Ovary (tissue), 10 donors: ENCODE measurements at regions of chr7 and their contacts with region 1.

Region 1: GRCh38 chr7:134690016-134690415 is 43.4 kb downstream of the BPGM start:
- DNase-seq: peak in 2 of 5 donors; percentile 37 to 56
- H3K4me3 ChIP-seq: peak overlapping the region; percentile 22
- H3K27ac ChIP-seq: peak overlapping the region; percentile 43 to 72
- H3K4me1 ChIP-seq: peaks cover 26% of the 10 kb centered on the region
- H3K27me3 ChIP-seq: no peaks in the 10 kb centered on the region
- CTCF ChIP-seq: peak; percentile 31 to 86 (median 82)
- EP300 ChIP-seq: no peak
- POLR2A ChIP-seq: no peak

Region 2: DNA sequence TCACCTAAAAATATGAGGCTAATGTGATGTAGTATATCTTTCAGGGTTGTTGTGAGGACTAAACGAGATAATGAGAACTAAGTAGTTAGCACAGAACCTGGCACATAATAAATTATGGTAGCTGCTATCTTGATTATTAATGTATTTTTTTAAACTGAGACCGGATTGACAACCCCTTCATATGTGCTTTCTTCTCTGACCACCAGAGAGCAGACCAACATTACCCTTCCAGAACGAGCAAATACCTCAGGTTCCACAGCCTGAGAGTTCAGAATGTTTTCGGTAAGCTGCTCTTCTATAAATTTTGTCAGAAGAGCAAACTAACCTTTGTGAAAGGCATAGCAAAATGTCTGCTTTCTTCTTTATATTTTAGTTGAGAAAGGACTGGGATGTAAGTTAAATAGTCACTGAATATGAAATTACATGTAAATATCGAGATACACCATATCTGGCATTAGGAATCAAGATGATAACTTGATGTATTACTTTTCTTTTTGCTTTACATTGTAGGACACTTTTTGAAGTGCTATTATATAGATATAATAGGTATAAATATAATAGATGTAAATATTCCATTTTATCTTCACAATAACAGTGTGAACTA is 57.0 kb before region 1 on chr7:
- intact Hi-C with region 1: no loop called
- DNase-seq: no peak
- H3K4me3 ChIP-seq: no peak overlapping the region
- H3K27ac ChIP-seq: no peak overlapping the region
- H3K4me1 ChIP-seq: no peaks in the 10 kb centered on the region
- H3K27me3 ChIP-seq: no peaks in the 10 kb centered on the region
- CTCF ChIP-seq: no peak
- EP300 ChIP-seq: no peak
- POLR2A ChIP-seq: no peak

Region 3: GRCh38 chr7:134724606-134725005 is 34.6 kb after region 1 on chr7:
- intact Hi-C with region 1: no loop called
- DNase-seq: no peak
- H3K4me3 ChIP-seq: no peak overlapping the region
- H3K27ac ChIP-seq: peak overlapping the region in 1 of 2 donors; percentile 4
- H3K4me1 ChIP-seq: peaks cover 22% of the 10 kb centered on the region
- H3K27me3 ChIP-seq: no peaks in the 10 kb centered on the region
- CTCF ChIP-seq: no peak
- EP300 ChIP-seq: no peak
- POLR2A ChIP-seq: no peak

Region 4: DNA sequence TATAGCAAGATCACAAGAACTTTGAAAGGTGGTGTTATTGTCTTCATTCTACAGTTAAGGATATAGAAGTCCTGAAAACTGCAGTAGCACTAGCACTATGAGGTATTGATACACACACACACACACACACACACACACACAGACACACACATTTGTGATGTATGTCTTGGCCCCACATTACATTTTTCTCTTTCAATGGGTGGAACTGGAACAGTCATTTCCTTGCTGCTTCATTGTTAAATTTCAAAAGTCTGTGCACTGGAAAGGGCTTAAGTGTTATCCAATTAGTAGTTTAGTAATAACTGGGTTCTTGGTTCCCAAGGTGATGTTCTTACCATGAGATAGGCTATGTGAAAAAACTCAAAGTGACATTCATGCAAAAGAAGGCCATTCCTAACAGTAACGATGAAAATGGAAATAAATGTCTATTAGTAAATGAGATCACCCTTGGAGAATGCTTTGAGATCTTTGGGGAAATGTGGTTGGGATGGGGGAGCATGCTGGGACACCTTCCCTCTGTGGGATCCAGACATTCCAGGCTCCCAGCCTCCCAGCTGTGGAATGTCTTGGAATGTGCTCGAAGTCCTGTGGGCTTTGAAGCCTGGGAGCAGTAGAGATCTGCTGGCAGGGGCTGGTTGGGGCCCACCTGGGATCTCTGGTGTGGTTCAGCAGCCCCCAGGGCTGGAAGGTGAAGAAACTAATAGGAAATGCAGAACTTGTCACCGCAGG is 52.1 kb after region 1 on chr7:
- intact Hi-C with region 1: loop called in 3 of 4 experiments (anchors 1 to 5 kb)
- DNase-seq: peak in 3 of 5 donors; percentile 23 to 56 (median 35)
- H3K4me3 ChIP-seq: no peak overlapping the region
- H3K27ac ChIP-seq: peak overlapping the region; percentile 16 to 85
- H3K4me1 ChIP-seq: peaks cover 16% of the 10 kb centered on the region
- H3K27me3 ChIP-seq: no peaks in the 10 kb centered on the region
- CTCF ChIP-seq: no peak
- EP300 ChIP-seq: no peak
- POLR2A ChIP-seq: no peak

Region 5: DNA sequence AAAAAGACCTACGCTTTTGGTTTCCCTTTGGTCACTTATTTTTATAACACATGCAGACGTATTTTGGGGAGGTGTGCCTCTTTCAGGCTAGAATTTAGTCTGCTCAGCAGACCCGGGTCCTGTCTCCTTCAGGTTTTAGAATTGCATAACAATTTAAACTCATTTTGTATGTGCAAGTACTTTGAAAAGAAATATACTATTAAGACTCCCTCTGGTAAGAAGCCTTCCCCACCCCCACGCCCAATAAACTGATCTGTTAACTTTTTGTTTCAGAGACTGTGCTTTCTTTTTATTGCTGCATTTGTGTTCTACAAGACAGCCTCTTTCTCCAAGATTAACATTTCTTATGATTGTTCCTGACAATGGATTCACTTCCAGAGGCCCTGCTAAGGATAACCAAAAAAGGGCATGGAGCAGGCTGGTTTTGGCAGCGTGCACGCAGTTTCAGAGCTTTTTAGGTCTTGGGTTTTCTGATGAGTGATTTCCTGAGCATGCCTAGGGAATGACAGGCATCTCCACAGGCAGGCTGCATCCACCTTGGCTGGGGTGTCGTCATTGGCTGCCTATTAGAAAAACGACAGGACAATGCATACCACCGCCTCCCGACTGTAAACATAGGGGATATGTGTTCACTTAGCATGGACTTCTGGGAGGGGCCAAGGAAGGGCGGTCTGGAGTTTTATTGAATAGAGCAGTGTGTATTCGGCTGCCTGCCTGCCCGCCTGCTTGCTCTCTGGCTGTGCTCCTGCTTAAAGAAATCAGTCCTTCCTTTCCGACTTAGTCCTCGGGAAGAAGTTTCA is 89.1 kb after region 1 on chr7 and contains the start of gene CALD1:
- intact Hi-C with region 1: loop called in 1 of 4 experiments (anchors 10 kb)
- DNase-seq: peak; percentile 69 to 76 (median 75)
- H3K4me3 ChIP-seq: peak within 1 kb of the TSS; percentile 71
- H3K27ac ChIP-seq: peak within 1 kb of the TSS; percentile 51 to 82
- H3K4me1 ChIP-seq: peaks cover 13% of the 10 kb centered on the region
- H3K27me3 ChIP-seq: no peaks in the 10 kb centered on the region
- CTCF ChIP-seq: no peak
- EP300 ChIP-seq: no peak
- POLR2A ChIP-seq: peak; percentile 36
- total RNA-seq, gene CALD1: 306 to 697 (median 463) TPM

Region 6: GRCh38 chr7:134954197-134955082 is 264.4 kb after region 1 on chr7:
- intact Hi-C with region 1: loop called in 2 of 4 experiments (anchors 2 to 5 kb)
- DNase-seq: no peak
- H3K4me3 ChIP-seq: no peak overlapping the region
- H3K27ac ChIP-seq: no peak overlapping the region
- H3K4me1 ChIP-seq: no peaks in the 10 kb centered on the region
- H3K27me3 ChIP-seq: no peaks in the 10 kb centered on the region
- CTCF ChIP-seq: peak in 2 of 3 donors; percentile 41 to 62
- EP300 ChIP-seq: no peak
- POLR2A ChIP-seq: no peak

Region 7: GRCh38 chr7:135886345-135887132 is 1196.5 kb after region 1 on chr7:
- intact Hi-C with region 1: no loop called
- DNase-seq: no peak
- H3K4me3 ChIP-seq: no peak overlapping the region
- H3K27ac ChIP-seq: no peak overlapping the region
- H3K4me1 ChIP-seq: no peaks in the 10 kb centered on the region
- H3K27me3 ChIP-seq: no peaks in the 10 kb centered on the region
- CTCF ChIP-seq: no peak
- EP300 ChIP-seq: no peak
- POLR2A ChIP-seq: no peak